ENCODE measurements at regions of chr4 and their contacts with region 1.

Region 1: GRCh38 chr4:178752954-178753525 is 1310.8 kb upstream of the AGA start:
- DNase-seq: no peak
- H3K4me3 ChIP-seq: no peak overlapping the region
- H3K27ac ChIP-seq: no peak overlapping the region
- H3K4me1 ChIP-seq: no peaks in the 10 kb centered on the region
- H3K27me3 ChIP-seq: no peaks in the 10 kb centered on the region
- CTCF ChIP-seq: no peak
- POLR2A ChIP-seq: no peak

Region 2: GRCh38 chr4:177713454-177713853 is 1039.6 kb before region 1 on chr4:
- intact Hi-C with region 1: no loop called
- DNase-seq: no peak
- H3K4me3 ChIP-seq: no peak overlapping the region
- H3K27ac ChIP-seq: no peak overlapping the region
- H3K4me1 ChIP-seq: no peaks in the 10 kb centered on the region
- H3K27me3 ChIP-seq: no peaks in the 10 kb centered on the region
- CTCF ChIP-seq: no peak
- POLR2A ChIP-seq: no peak

Region 3: DNA sequence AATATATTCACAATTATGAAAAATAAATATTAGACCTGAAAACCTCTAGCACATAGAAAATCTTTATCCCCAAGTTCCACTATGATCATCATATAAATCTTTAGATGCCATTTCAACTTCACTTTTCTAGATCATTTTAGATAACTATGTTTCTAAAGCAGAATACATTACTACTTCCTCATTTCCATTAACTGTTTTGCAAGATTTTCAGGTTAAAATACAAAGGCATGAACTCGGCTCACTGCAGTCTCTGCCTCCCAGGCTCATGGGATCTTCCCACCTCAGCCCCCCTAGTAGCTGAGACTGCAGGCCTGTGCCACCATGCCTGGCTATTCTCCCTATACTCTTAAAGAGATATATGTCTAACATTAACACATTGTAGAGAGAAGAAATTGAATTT is 55.1 kb after region 1 on chr4:
- intact Hi-C with region 1: loop called (anchors 2 kb)
- DNase-seq: no peak
- H3K4me3 ChIP-seq: no peak overlapping the region
- H3K27ac ChIP-seq: no peak overlapping the region
- H3K4me1 ChIP-seq: no peaks in the 10 kb centered on the region
- H3K27me3 ChIP-seq: no peaks in the 10 kb centered on the region
- CTCF ChIP-seq: no peak
- POLR2A ChIP-seq: no peak